HAP-1 (cell line): ENCODE measurements at regions of chr15 and their contacts with region 1.

Region 1: DNA sequence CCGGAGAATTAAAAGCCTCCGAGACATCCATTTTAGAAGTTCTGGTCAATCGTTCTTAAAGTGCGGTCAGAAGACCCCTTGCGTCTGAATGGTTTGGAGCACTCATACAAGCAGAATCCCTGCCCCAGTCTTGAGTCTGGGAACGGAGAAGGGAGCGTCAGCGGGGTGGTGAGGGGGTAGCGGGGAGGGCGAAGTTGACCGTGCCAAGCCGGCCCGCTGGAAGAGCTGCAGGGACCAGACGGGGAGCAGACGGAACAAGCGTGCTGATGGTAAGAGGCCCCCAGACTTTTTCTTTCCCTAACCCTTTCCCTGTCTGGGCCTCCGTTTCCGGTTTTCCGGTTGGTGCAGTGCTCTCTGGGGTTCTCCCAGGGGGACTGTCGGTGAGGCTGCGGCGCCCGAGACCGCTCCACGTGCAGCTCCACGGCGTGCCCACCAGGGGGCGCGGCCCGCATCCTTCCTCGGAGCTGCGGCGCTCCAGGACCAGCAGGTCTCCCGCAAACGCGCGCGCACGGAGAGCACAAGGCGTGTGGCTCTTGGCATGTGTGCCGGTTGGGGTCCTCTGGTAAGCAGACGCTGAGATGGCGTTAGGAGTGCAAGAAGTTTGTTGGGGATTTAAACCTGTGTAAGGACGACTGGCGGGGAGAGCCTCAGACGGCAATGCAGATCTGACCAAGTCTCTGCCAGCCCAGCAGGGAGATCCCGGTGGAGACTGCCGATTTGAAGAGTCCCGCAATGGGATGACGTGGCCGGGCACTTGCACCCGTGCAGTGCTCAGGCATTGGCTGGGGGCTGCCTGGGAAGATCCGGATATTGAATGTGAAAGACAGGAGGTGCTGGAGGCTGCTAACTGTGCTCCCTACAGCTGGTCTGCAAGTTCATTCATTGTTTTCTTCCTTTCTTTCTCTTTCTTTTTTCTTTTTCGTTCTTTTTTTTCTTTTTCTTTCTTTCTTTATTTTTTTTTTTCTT is 19.2 kb upstream of the CORO2B start:
- DNase-seq: peak; percentile 96
- H3K4me3 ChIP-seq: peak overlapping the region; percentile 21
- H3K4me1 ChIP-seq: peaks cover 12% of the 10 kb centered on the region
- H3K27me3 ChIP-seq: no peaks in the 10 kb centered on the region

Region 2: DNA sequence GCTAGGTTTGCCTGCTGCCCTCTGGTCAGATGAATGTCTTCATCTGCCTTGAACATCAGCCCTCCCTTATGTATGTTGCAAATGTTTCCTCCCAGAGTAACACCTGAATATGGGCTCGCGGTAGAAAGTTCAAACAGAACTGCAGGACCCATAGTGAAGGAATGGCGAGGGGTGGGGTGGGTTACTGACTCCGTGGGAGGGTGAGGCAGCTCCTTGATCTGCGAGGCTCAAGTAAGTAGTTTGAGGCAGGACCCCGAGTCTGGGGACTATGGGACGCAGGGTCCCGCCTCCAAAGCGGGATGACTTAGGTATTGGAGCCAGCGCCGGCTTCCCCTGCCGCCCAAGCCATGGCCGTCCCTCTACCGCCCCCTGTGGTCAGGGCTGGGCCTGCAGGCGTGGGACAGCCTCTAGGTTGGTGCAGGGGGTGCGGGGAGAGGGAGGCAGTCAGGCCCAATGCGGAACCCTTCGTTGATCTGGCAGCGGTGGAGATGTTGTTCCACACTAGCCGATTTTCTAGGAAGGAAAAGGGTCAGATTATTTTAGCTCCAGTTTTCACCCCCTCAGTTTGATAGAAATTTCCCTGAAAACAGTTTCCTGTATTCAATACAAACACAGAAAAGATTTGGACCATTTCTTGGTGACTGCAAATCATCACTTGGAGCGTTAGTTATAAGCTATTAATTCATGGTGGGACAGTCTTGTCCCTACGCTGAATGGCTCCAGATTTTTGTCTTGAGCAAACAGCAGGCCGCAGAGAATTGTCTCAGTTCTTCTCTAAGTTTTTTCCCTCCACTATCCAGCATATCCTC is 91.5 kb after region 1 on chr15:
- in situ Hi-C with region 1: loop called (anchors 10 kb)
- DNase-seq: peak; percentile 58 to 94
- H3K4me3 ChIP-seq: no peak overlapping the region
- H3K4me1 ChIP-seq: peaks cover 14% of the 10 kb centered on the region
- H3K27me3 ChIP-seq: no peaks in the 10 kb centered on the region

Region 3: GRCh38 chr15:68672781-68673205 is 113.2 kb after region 1 on chr15:
- in situ Hi-C with region 1: loop called (anchors 5 kb)
- DNase-seq: peak in 1 of 2 experiments; percentile 48
- H3K4me3 ChIP-seq: no peak overlapping the region
- H3K4me1 ChIP-seq: no peaks in the 10 kb centered on the region
- H3K27me3 ChIP-seq: no peaks in the 10 kb centered on the region